ENCODE measurements at regions of chr3 and their contacts with region 1.

Region 1: GRCh38 chr3:76024640-76025039 is 239.3 kb upstream of the ZNF717 start:
- DNase-seq: no peak
- ATAC-seq: no peak

Region 2: DNA sequence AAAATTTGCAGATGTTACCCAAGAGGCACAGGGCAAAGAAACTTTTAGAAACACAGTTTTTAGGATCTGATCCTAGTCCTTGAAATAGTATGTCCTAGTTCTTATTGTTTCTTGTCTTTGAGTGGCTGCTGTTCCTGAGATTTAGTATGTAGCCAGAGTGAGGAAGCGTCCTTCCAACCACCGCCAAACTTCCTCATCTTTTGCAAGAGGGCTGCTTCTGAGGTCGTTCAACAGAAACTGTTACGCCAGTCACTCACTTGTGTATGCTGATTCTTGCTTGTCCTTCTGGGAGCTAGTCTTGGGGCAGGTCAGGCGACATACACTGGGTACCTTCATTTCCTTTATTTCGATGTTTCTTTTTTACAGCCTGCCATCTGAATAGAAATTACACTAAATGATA is 338.0 kb after region 1 on chr3:
- intact Hi-C with region 1: no loop called
- DNase-seq: no peak
- ATAC-seq: no peak

Region 3: DNA sequence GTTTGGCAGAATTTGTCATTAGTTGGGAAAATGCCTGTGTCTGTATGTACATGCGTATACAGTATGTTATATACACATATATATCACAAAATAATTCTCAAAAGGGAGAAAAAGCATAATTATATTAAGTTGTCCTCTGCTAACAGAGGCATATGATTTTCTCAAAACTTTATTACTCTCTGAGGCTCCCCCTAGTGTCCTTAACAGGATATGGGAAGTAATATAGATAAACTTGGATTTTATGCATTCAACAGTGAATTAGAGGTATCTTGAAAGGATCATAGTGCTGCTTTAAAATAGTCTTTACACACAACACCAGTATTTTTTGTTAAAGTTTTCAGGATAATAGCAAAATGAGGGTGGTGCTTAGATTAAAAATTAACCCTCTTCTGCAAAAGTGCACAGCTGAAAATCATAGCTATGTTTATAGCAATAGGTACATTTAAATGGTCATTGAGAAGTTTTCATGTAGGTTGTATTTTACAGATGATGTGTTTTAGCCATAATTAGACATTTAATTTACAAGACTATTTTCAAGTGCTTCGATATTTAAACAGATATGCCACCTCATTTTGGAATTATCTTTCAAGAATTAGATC is 561.3 kb after region 1 on chr3:
- intact Hi-C with region 1: loop called (anchors 5 kb)
- DNase-seq: no peak
- ATAC-seq: no peak

Region 4: GRCh38 chr3:76888856-76889255 is 864.2 kb after region 1 on chr3:
- intact Hi-C with region 1: no loop called
- DNase-seq: no peak
- ATAC-seq: no peak